ENCODE measurements at regions of chr12 and their contacts with region 1.

Region 1: DNA sequence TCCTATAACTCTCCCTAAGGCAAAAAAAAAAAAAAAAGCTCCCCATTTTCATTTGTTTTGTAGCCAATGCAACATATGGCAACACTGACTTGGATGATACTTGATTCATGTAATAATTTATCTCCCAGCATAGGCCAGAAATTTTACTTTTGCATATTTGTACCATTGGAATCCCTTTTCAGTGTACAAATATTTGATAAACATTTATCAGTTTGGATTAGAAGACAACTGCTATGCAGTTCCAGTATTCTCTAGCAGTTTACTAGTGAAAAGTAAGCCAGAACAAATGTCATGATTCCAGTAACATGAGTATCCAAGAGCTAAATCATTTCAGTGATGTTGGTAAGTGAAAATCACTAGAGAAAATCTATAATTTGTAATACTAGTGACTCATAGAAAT is 392.3 kb downstream of the CCER1 start:
- DNase-seq: no peak
- ATAC-seq: no peak
- H3K4me3 ChIP-seq: no peak overlapping the region
- H3K4me3 Mint-ChIP-seq: no peak overlapping the region
- H3K27ac ChIP-seq: no peak overlapping the region
- H3K27ac Mint-ChIP-seq: no peak overlapping the region
- H3K4me1 ChIP-seq: no peaks in the 10 kb centered on the region
- H3K4me1 Mint-ChIP-seq: no peaks in the 10 kb centered on the region
- H3K27me3 ChIP-seq: no peaks in the 10 kb centered on the region
- H3K27me3 Mint-ChIP-seq: no peaks in the 10 kb centered on the region
- CTCF ChIP-seq: no peak

Region 2: DNA sequence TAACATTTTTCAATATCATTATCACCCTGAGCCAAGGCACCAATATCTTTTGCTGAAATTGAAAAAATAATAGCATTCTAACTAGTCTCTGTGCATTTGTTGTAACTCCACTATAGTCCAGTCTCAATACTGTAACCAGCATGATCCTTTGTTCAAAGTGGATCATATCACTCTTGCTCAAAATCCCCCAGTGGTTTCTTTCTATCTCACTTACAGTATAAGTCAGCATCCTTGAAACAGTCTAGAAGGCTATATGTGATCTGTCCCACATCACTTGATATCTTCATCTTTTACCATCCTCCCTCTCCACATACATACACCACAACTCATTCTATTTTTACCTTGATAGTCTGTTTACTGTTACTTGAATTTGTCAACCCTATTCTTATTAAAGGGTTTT is 43.4 kb before region 1 on chr12:
- CTCF ChIA-PET with region 1: no interaction called
- POLR2A ChIA-PET with region 1: no interaction called
- intact Hi-C with region 1: loop called (anchors 2 kb)
- DNase-seq: no peak
- ATAC-seq: no peak
- H3K4me3 ChIP-seq: no peak overlapping the region
- H3K4me3 Mint-ChIP-seq: no peak overlapping the region
- H3K27ac ChIP-seq: no peak overlapping the region
- H3K27ac Mint-ChIP-seq: no peak overlapping the region
- H3K4me1 ChIP-seq: no peaks in the 10 kb centered on the region
- H3K4me1 Mint-ChIP-seq: peaks cover 2% of the 10 kb centered on the region
- H3K27me3 ChIP-seq: no peaks in the 10 kb centered on the region
- H3K27me3 Mint-ChIP-seq: no peaks in the 10 kb centered on the region
- CTCF ChIP-seq: no peak

Region 3: GRCh38 chr12:90575995-90576394 is 13.3 kb after region 1 on chr12:
- CTCF ChIA-PET with region 1: no interaction called
- POLR2A ChIA-PET with region 1: no interaction called
- intact Hi-C with region 1: no loop called
- DNase-seq: no peak
- ATAC-seq: no peak
- H3K4me3 ChIP-seq: no peak overlapping the region
- H3K4me3 Mint-ChIP-seq: no peak overlapping the region
- H3K27ac ChIP-seq: no peak overlapping the region
- H3K27ac Mint-ChIP-seq: no peak overlapping the region
- H3K4me1 ChIP-seq: no peaks in the 10 kb centered on the region
- H3K4me1 Mint-ChIP-seq: no peaks in the 10 kb centered on the region
- H3K27me3 ChIP-seq: no peaks in the 10 kb centered on the region
- H3K27me3 Mint-ChIP-seq: no peaks in the 10 kb centered on the region
- CTCF ChIP-seq: no peak